Right ventricle myocardium superior (tissue), 1 donor: ENCODE measurements at regions of chr1 and their contacts with region 1.

Region 1: DNA sequence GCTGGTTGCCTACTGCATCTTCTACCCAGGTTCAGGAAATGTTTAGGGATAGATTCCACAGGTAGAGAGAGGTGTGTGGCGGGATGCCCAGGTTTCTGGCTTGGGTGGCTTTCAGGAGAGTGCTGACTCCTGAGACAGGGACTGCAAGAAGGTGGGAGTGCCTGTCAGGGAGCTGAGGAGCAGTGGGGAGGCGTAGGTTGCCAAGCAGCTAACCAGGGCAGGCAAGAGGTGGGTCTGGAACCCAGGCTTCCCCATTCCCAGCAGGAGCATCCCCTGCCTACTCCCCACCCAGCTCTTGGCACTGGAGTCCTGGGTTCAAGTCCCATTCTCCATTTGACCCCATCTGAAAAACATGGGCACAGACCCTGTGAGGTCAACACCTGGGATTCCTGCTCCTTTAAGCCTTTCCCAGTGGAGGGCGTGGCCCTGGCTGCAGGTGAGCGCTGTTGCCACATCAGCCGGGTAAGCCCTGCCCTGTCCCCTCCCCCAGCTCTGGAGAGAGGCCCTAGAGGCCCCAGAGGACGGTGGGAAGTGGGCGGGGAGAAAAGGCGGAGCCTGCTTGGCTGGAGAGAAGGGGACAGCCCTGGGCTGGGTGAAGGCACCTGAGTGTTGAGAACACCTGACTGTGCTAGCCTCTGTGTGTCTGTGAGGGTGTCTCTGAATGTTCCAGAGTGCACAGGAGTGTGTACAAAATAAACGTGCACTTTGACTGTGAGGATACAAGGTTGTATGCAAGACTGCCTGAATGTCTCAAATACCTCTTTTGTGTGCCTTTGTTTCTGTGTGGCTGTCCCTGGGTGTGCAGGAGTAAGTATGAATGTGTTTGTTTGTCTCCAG is 14.0 kb upstream of the SYNC start:
- DNase-seq: peak; percentile 71
- ATAC-seq: peak; percentile 77

Region 2: DNA sequence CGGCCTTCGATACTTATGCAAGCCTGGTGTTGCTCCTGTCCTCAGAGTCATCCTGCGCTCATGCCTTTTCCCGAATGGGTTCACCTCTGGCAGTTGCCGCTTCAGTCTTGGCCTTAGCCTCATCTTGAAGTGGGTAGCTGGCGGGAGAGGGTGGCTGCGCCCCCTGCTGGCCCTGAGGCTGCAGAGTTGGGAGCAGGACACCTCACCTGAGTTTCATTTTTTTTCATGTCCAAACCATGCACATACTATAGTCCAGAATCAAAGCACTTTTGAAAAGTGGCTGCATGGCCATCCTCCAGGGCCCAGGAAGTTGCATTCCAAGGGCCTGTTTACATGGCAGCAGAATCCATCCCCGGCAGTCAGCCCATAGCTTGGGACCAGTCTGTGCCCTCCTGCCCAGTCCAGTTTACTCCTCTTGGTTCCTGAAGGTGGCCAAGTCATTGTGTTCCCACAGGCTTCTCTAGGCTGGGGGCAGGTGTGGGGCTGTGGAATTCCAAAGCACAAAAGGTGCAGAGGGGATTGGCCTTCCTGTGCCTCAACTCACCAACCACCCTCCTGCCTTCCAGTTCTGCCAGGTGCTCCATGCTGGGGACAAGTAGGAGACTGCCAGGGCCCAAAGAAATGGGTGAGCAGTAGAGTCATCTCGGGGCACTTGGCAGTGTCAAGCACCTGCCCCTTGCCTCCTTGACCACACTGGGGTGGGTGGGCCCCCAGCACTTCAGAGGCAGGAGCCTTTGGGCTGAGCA is 56.7 kb after region 1 on chr1:
- intact Hi-C with region 1: loop called (anchors 1 kb)
- DNase-seq: peak; percentile 90
- ATAC-seq: peak; percentile 92